ENCODE measurements at regions of chr19 and their contacts with region 1.

Region 1: DNA sequence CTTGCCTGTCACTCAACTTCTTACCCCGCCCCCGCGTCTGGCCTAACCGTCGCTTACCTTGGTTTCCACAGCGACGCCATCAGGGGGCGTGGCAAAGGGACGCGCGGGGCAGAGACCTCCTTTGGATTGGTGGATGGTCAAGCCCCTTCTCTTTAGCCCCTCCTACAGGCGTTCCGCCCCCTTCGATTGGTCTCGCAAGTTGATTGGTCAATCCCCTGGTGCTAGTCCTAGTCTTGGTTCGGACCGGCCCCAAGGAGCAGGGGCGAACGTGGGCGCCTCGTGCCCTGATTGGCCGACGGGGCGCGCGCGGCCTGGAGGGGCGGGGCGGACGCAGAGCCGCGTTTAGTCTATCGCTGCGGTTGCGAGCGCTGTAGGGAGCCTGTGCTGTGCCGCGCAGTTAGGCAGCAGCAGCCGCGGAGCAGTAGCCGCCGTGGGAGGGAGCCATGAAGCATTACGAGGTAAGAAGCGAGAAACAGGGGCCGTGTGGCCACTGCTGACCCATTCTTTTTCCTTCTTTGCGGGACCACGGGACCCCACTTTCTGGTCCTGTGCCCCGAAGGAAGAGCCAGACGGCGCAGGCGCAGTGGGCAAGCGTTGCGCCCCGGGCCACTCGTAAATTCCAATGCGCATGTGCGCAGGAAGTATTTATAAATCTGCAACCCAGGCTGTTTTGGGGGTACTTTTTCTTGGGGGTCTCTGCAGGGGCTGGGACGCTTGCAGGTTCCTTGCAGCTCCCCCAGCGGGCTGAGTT is at the start of gene TECR:
- DNase-seq: peak; percentile 100
- H3K4me3 Mint-ChIP-seq: peak within 1 kb of the TSS; percentile 96
- H3K27ac Mint-ChIP-seq: peak within 1 kb of the TSS; percentile 97
- H3K4me1 Mint-ChIP-seq: peaks cover 13% of the 10 kb centered on the region
- H3K27me3 Mint-ChIP-seq: no peaks in the 10 kb centered on the region
- total RNA-seq, gene TECR: 110 and 120 TPM in 2 replicates

Region 2: DNA sequence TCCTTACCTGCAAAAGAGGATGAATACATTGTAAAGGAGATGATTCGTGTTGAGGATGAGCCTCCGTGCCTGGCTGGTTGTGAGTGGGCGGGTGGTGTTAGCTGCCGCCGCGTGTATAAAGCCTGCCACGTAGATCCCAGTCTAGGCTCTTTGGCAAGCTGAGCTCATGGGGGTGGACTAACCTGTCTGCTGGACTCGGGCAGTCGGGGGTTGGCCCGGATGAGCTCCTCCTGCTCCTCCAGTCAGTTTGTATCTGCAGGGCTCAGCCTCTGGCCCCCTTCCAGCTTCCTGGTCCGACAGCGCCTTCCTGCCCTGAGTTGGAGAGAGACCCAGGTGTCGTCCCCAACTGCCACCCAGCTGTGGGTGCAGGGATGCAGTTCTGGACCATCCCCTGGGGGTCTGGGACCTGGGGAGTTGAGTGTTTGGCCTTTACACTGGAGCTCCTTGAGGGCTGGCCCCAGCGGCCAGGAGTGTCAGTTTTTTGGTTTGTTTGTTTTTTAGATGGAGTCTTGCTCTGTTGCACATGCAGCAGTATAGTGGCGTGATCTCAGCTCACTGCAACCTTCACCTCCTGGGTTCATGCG is 20.9 kb after region 1 on chr19:
- intact Hi-C with region 1: loop called (anchors 2 kb)
- DNase-seq: no peak
- H3K4me3 Mint-ChIP-seq: no peak overlapping the region
- H3K27ac Mint-ChIP-seq: peak overlapping the region; percentile 14
- H3K4me1 Mint-ChIP-seq: peaks cover 6% of the 10 kb centered on the region
- H3K27me3 Mint-ChIP-seq: no peaks in the 10 kb centered on the region

Region 3: DNA sequence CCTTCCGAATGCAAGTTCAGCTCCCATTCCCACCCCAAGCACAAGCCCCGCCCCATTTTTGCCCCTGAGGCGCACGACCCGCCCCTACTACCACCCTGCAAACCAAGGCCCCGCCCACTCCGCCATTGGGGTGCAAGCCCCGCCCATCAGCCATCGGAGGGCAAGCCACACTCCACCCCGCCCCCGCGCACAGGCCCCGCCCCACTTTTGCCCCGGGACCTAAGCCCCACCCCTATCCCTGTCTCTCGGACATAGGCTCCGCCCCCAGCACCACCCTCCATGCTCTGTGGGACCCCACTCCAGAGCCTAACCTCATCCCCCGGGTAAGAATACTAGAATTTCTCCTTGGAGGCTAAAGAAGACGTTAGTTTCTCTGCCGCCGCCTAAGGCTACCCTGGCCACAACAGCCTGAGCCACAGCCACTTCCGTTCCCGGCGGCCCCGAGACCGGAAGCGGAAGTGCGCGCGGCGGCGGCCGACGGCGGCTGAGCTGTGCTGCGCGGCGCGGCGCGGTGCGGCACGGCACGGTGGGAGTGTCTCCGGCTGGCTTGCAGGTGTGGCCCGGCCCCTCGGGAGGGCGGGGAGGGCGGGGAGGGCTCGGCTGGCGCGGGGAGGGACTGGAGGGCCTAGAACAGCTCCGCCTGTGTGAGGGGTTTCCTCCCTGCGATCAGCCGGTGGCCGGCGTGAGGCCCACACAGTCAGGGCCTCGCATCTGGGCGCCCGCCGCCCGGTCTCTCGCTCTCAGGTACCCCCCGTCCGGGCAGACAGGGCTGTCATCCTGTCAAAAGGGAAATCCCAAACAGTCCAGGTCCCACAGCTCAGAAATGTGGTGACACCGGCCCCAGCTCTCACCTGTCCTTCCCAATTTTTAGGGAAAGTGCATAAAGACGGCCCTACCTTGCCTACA is 160.4 kb after region 1 on chr19 and contains the start of gene ZNF333:
- intact Hi-C with region 1: loop called (anchors 1 kb)
- DNase-seq: peak; percentile 94
- H3K4me3 Mint-ChIP-seq: peak within 1 kb of the TSS; percentile 93
- H3K27ac Mint-ChIP-seq: peak within 1 kb of the TSS; percentile 99
- H3K4me1 Mint-ChIP-seq: peaks cover 16% of the 10 kb centered on the region
- H3K27me3 Mint-ChIP-seq: peaks cover 3% of the 10 kb centered on the region
- total RNA-seq, gene ZNF333: 10.0 and 11.1 TPM in 2 replicates

Measured in activated T-helper 1 cell treated with anti-CD3 and anti-CD28 coated beads, Interleukin-12 subunit alpha, Interleukin-12 subunit beta, Interleukin-2, Interleukin-4 antibody, amounts not matched to agents 30 ng/mL and 10 ng/mL and 1 ng/mL, durations not matched to agents 14 hours and 24 hours and 36 hours (primary cell).